ENCODE measurements at regions of chr19 and their contacts with region 1.

Region 1: DNA sequence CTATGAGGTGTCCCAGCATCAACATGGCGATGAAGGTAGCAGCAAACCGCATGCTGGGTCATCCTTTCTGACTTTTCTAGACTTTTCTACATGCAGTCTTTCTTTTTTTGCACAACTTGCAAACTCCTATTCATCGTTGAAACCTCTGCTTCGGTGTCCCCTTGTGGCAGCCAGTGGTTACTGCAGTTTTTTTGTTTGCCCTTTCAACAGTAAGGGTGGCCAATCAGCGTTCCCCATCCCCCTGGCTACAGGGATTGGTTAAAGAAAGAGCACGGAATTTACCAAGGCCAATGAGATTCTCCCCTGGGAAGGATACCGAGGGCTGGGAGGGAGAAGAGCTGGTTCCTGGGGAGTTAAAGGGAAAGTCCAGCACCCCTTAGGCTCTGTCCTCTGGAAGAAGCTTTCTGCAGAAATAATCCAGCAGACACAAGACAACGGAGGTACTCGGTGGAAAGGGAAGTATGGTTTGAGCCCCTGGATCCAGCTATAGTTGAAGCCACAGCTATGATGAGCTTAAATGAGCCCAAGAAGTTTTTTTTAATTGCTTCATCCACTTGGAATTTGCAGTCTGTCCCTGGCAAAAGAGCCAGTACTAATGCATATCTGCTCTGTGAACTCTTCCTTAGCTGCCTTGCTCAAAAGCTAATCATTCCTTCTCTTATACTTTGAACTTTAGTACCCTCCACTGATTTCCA is 5.6 kb upstream of the LSM4 start:
- DNase-seq: peak; percentile 92
- H3K4me3 Mint-ChIP-seq: peak overlapping the region; percentile 47
- H3K27ac Mint-ChIP-seq: peak overlapping the region; percentile 48
- H3K4me1 Mint-ChIP-seq: peaks cover 22% of the 10 kb centered on the region
- H3K27me3 Mint-ChIP-seq: no peaks in the 10 kb centered on the region

Region 2: DNA sequence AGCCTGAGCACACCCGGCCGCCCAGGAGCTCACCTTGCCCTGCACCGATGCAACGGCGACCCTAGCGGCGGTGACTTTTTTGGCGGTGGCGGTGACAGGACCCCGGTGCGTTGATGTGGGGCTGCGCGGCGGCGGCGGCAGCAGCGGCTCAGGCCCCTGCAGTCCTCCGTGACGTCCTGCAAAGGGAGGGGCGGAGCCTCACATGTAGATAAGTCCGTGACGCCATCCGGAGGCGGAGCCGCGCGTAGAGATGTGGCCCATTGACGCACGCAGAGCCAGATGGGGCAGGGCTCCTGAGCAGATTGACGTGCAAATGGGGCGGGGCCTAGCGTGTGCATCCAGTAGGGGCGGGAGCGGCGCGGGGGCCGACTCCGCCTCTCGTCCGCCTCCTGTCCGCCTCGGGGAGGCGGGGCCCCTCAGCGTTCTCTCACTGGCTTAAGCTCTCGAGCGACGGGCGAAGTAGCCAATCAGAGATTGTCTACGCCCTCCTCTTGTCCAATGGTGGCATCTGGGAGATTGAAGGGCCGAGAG is 124.6 kb before region 1 on chr19 and contains the start of gene RAB3A:
- CTCF ChIA-PET with region 1: interaction called, 15 read pairs
- POLR2A ChIA-PET with region 1: no interaction called
- DNase-seq: peak; percentile 100
- H3K4me3 Mint-ChIP-seq: peak within 1 kb of the TSS; percentile 90
- H3K27ac Mint-ChIP-seq: peak within 1 kb of the TSS; percentile 90
- H3K4me1 Mint-ChIP-seq: peaks cover 31% of the 10 kb centered on the region
- H3K27me3 Mint-ChIP-seq: peaks cover 5% of the 10 kb centered on the region
- total RNA-seq, gene RAB3A: 3.7 to 5.3 TPM

Region 3: DNA sequence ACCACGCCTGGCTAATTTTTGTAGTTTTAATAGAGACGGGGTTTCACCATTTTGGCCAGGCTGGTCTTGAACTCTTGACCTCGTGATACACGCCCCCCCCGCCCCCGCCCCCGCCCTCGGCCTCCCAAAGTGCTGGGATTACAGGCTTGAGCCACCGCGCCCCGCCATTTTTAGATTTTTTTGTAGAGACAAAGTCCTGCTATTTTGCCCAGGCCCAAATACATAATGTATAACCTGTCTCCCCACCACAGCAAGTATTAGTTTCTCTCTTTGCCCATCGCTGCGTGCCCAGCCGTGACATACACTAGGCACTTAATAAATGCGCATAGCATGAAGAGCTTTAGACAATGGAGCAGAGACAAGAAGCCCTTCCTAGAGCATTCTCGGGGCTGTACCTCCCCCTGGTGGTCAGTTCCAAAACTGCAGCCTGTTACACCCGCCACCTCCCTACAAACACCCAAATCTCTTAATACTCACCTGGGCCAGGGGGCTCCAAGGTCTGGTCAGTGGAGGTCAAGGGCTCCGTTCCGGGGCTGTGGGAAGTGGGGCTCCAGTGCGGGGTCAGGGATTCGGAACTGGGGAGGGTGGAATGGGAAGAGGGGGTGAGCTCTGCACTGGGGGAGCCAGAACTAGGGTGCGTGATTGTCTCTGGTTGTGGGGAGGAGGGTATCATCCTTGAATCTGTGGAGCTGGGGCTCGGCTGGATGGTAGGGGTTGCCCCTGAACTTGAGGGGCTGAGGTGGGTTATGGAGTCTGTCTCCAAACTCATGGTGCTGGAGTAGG is 76.7 kb before region 1 on chr19:
- CTCF ChIA-PET with region 1: interaction called, 18 read pairs
- POLR2A ChIA-PET with region 1: interaction called, 4 read pairs
- DNase-seq: peak; percentile 84
- H3K4me3 Mint-ChIP-seq: no peak overlapping the region
- H3K27ac Mint-ChIP-seq: no peak overlapping the region
- H3K4me1 Mint-ChIP-seq: peaks cover 6% of the 10 kb centered on the region
- H3K27me3 Mint-ChIP-seq: peaks cover 31% of the 10 kb centered on the region

Region 4: GRCh38 chr19:18291590-18292461 is 36.7 kb before region 1 on chr19:
- CTCF ChIA-PET with region 1: interaction called, 4 read pairs
- POLR2A ChIA-PET with region 1: interaction called, 1,184 read pairs
- DNase-seq: peak; percentile 90
- H3K4me3 Mint-ChIP-seq: peak overlapping the region; percentile 96
- H3K27ac Mint-ChIP-seq: peak overlapping the region; percentile 97
- H3K4me1 Mint-ChIP-seq: peaks cover 79% of the 10 kb centered on the region
- H3K27me3 Mint-ChIP-seq: no peaks in the 10 kb centered on the region

Region 5: GRCh38 chr19:18340190-18340989 is 11.9 kb after region 1 on chr19 and contains the start of gene PGPEP1:
- CTCF ChIA-PET with region 1: interaction called, 29 read pairs
- POLR2A ChIA-PET with region 1: interaction called, 3 read pairs
- DNase-seq: peak; percentile 68
- H3K4me3 Mint-ChIP-seq: peak within 1 kb of the TSS; percentile 83
- H3K27ac Mint-ChIP-seq: peak within 1 kb of the TSS; percentile 84
- H3K4me1 Mint-ChIP-seq: peaks cover 23% of the 10 kb centered on the region
- H3K27me3 Mint-ChIP-seq: peaks cover 1% of the 10 kb centered on the region
- total RNA-seq, gene PGPEP1: 42.7 to 44.0 TPM

Region 6: DNA sequence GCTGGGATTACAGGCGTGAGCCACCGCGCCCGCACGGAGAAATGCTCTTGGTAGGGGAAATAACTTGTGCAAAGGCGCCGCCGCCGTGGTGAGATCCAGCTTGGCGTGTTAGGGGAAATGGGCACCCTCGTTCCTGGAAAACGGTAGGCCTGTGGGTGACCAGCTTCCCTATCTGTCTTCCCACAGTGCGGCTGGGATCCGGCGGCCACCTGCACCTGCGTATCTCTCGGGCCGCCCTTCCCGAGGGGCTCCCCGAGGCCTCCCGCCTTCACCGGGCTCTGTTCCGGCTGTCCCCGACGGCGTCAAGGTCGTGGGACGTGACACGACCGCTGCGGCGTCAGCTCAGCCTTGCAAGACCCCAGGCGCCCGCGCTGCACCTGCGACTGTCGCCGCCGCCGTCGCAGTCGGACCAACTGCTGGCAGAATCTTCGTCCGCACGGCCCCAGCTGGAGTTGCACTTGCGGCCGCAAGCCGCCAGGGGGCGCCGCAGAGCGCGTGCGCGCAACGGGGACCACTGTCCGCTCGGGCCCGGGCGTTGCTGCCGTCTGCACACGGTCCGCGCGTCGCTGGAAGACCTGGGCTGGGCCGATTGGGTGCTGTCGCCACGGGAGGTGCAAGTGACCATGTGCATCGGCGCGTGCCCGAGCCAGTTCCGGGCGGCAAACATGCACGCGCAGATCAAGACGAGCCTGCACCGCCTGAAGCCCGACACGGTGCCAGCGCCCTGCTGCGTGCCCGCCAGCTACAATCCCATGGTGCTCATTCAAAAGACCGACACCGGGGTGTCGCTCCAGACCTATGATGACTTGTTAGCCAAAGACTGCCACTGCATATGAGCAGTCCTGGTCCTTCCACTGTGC is 59.8 kb after region 1 on chr19:
- CTCF ChIA-PET with region 1: interaction called, 13 read pairs
- POLR2A ChIA-PET with region 1: no interaction called
- DNase-seq: peak; percentile 81
- H3K4me3 Mint-ChIP-seq: peak overlapping the region; percentile 44
- H3K27ac Mint-ChIP-seq: no peak overlapping the region
- H3K4me1 Mint-ChIP-seq: peaks cover 17% of the 10 kb centered on the region
- H3K27me3 Mint-ChIP-seq: peaks cover 54% of the 10 kb centered on the region

Region 7: DNA sequence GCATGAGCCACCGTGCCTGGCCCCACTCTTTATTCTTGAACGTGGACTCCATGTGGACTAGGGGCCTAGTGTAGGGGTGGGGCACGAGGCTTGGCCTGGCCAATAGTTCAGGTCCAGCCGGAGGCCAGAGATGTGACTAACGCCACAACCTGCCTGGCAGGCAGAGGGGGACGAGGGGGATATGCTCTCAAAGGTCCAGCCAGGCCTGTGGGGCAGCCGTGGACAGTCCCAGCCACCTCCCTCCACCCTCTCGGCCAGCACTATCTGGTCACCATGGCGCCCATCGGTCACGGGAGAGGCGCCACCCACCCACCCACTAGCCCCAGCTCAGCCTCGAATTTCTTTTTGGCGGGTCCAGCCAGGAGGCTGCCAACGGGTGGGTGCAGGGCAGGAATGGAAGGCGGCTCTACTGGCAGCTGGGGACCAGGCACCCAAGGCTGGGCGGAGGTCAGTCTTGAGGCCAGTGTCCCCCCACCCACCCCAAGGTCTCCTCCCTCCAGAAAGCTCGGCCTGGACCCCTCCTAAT is 569.7 kb after region 1 on chr19:
- CTCF ChIA-PET with region 1: no interaction called
- POLR2A ChIA-PET with region 1: no interaction called
- DNase-seq: no peak
- H3K4me3 Mint-ChIP-seq: no peak overlapping the region
- H3K27ac Mint-ChIP-seq: no peak overlapping the region
- H3K4me1 Mint-ChIP-seq: peaks cover 4% of the 10 kb centered on the region
- H3K27me3 Mint-ChIP-seq: peaks cover 29% of the 10 kb centered on the region

Measured in activated CD4-positive, alpha-beta memory T cell treated with anti-CD3 and anti-CD28 coated beads, Interleukin-2, amount 10 ng/mL, durations not matched to agents 7 days and 5 days (primary cell).